AG04449 (cell line): ENCODE measurements at regions of chr16 and their contacts with region 1.

Region 1: GRCh38 chr16:80824718-80825364 is 20.4 kb upstream of the CDYL2 start:
- DNase-seq: no peak
- H3K4me3 ChIP-seq: no peak overlapping the region
- CTCF ChIP-seq: peak; percentile 62

Region 2: GRCh38 chr16:80540516-80541272 is 284.1 kb before region 1 on chr16 and contains the start of gene DYNLRB2:
- CTCF ChIA-PET with region 1: interaction called, 11 read pairs
- POLR2A ChIA-PET with region 1: no interaction called
- DNase-seq: peak; percentile 47
- H3K4me3 ChIP-seq: peak within 1 kb of the TSS; percentile 83
- CTCF ChIP-seq: no peak

Region 3: GRCh38 chr16:80837421-80838231 is 12.8 kb after region 1 on chr16:
- CTCF ChIA-PET with region 1: interaction called, 13 read pairs
- POLR2A ChIA-PET with region 1: no interaction called
- DNase-seq: no peak
- H3K4me3 ChIP-seq: no peak overlapping the region
- CTCF ChIP-seq: no peak